SK-N-SH (cell line): ENCODE measurements at regions of chr5 and their contacts with region 1.

Region 1: GRCh38 chr5:174735498-174736330 is 11.3 kb downstream of the MSX2 start:
- DNase-seq: peak; percentile 89
- H3K4me3 ChIP-seq: peak overlapping the region; percentile 39 to 63
- H3K27ac ChIP-seq: no peak overlapping the region
- H3K4me1 ChIP-seq: peaks cover 3 to 12% of the 10 kb centered on the region in 2 experiments; a peak in 1 of 4 replicates
- H3K27me3 ChIP-seq: peaks cover 4% of the 10 kb centered on the region
- CTCF ChIP-seq: peak; percentile 70
- EP300 ChIP-seq: no peak
- RAD21 ChIP-seq: peak; percentile 93

Region 2: DNA sequence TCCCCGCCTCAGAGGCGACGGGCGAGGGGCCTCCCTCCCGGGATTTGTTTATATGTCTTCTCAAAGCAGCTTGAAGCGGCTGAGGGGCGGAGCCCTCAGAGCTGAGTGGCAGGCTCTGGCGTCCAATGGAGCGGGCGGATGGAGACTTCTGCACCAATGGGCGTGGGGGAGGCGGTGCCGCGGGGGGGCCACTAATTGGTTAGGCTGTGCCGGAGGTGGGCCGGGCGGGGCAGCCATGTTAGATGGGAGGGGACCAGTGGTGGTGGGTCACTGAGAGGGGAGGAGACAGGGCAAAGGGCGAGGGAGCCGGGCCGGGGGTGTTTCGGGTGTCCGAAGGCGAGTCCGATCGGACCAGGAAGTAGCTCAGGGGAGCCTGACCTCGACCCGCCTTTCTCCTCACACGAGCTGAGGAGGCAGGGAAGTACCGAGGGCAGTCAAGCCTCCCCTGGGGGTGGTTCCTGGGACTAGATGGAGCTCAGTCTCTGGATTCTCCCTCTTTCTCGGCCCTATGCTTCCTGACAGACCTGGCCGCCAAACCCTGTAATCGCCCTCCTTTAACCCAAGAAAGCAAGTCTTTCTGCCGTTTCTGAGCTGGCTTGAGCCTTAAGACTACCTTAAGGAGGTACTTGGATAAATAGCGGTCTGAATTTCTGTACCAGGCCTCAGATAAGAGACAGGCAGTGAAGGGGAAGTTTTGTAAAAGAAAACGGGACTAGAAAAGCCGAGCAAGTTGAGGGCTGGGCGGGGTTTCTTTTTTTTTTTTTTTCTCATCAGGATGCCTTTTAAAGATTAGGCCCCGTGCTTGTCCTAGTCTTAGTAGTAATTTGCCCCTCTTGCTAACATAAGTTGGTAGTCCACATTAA is 1678.4 kb before region 1 on chr5:
- CTCF ChIA-PET with region 1: no interaction called
- POLR2A ChIA-PET with region 1: no interaction called
- DNase-seq: peak; percentile 97
- H3K4me3 ChIP-seq: peak overlapping the region; percentile 95
- H3K27ac ChIP-seq: peak overlapping the region; percentile 91 to 98
- H3K4me1 ChIP-seq: peaks cover 4 to 5% of the 10 kb centered on the region in 2 experiments; a peak in 3 of 4 replicates
- H3K27me3 ChIP-seq: no peaks in the 10 kb centered on the region
- CTCF ChIP-seq: no peak; the same call in 1 of the 2 replicates
- EP300 ChIP-seq: no peak
- RAD21 ChIP-seq: no peak

Region 3: GRCh38 chr5:174327317-174328236 is 408.1 kb before region 1 on chr5:
- CTCF ChIA-PET with region 1: interaction called, 11 read pairs
- POLR2A ChIA-PET with region 1: no interaction called
- DNase-seq: peak; percentile 77
- H3K4me3 ChIP-seq: no peak overlapping the region; a peak in 1 of 4 replicates
- H3K27ac ChIP-seq: peak overlapping the region in 1 of 2 experiments; percentile 95; a peak in 2 of 4 replicates
- H3K4me1 ChIP-seq: peaks cover 17 to 50% of the 10 kb centered on the region in 2 experiments
- H3K27me3 ChIP-seq: no peaks in the 10 kb centered on the region
- CTCF ChIP-seq: peak; percentile 97
- EP300 ChIP-seq: peak in 1 of 2 experiments; percentile 23; a peak in 1 of 4 replicates
- RAD21 ChIP-seq: peak; percentile 90

Region 4: GRCh38 chr5:174409070-174409469 is 326.6 kb before region 1 on chr5:
- CTCF ChIA-PET with region 1: interaction called, 192 read pairs
- POLR2A ChIA-PET with region 1: no interaction called
- DNase-seq: no peak
- H3K4me3 ChIP-seq: no peak overlapping the region
- H3K27ac ChIP-seq: no peak overlapping the region
- H3K4me1 ChIP-seq: peaks cover 17% of the 10 kb centered on the region in 2 experiments
- H3K27me3 ChIP-seq: no peaks in the 10 kb centered on the region
- CTCF ChIP-seq: peak; percentile 45
- EP300 ChIP-seq: no peak
- RAD21 ChIP-seq: no peak

Region 5: GRCh38 chr5:174717808-174718455 is 17.8 kb before region 1 on chr5:
- CTCF ChIA-PET with region 1: interaction called, 10 read pairs
- POLR2A ChIA-PET with region 1: no interaction called
- DNase-seq: no peak
- H3K4me3 ChIP-seq: no peak overlapping the region
- H3K27ac ChIP-seq: no peak overlapping the region
- H3K4me1 ChIP-seq: peaks cover 0 to 20% of the 10 kb centered on the region in 2 experiments; a peak in 2 of 4 replicates
- H3K27me3 ChIP-seq: peaks cover 35% of the 10 kb centered on the region
- CTCF ChIP-seq: no peak
- EP300 ChIP-seq: no peak
- RAD21 ChIP-seq: no peak

Region 6: DNA sequence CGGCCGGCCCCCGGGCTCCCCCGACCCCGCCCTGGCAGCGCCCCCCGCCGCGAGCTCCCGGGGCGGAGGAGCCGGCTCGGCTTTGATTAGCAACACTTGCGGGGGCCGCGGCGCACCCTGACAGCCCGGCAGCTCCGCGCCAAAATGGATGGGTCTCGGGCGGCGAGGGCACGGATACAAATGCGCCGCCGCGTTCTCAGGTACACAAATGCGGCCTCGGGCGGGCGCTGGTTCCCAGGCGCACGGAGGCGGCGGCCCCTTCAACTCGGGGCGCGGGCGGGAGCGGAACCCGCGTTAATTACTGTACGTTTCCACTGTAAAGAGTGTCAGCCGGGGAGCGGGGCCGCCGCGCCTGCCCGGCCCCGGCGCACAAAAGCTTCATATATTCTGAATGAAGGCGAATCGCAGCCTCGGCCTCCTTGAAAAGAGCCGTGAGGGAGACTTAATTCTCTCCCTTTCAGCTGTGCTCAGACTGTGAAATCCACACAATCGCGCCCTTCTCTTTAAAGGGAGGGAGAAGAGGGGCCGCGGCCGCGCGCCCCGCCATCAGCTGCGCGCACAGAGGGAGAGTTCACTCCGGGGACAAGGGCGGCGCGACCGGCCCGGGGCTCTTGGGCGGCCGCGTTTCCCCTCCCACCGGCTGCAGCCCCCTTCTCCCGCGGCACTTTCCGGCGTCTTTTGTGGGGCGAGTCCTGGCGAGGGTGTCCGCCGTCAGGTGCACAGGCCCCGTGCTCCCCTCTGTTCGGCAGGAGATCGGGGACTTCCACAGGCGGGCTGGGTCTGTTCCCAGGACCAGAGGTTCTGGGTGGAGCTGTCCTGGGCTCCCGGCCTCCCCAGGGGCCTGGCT is 15.7 kb after region 1 on chr5:
- CTCF ChIA-PET with region 1: interaction called, 35 read pairs
- POLR2A ChIA-PET with region 1: no interaction called
- DNase-seq: peak; percentile 87
- H3K4me3 ChIP-seq: peak overlapping the region; percentile 53 to 71
- H3K27ac ChIP-seq: peak overlapping the region in 1 of 2 experiments; percentile 64; a peak in 2 of 4 replicates
- H3K4me1 ChIP-seq: no peaks in the 10 kb centered on the region; a peak in 1 of 4 replicates
- H3K27me3 ChIP-seq: peaks cover 5% of the 10 kb centered on the region; the same call in 1 of the 2 replicates
- CTCF ChIP-seq: no peak
- EP300 ChIP-seq: no peak
- RAD21 ChIP-seq: no peak